CD4-positive, alpha-beta T cell (primary cell): ENCODE measurements at regions of chr22 and their contacts with region 1.

Region 1: GRCh38 chr22:35921777-35922176 is 106.8 kb downstream of the RBFOX2 start:
- DNase-seq: peak in 7 of 14 experiments; percentile 3 to 63 (median 39)
- ATAC-seq: no peak
- H3K4me3 ChIP-seq: no peak overlapping the region
- H3K4me3 Mint-ChIP-seq: no peak overlapping the region
- H3K27ac ChIP-seq: no peak overlapping the region
- H3K27ac Mint-ChIP-seq: no peak overlapping the region
- H3K4me1 ChIP-seq: no peaks in the 10 kb centered on the region
- H3K4me1 Mint-ChIP-seq: no peaks in the 10 kb centered on the region
- H3K27me3 ChIP-seq: no peaks in the 10 kb centered on the region
- H3K27me3 Mint-ChIP-seq: no peaks in the 10 kb centered on the region
- CTCF ChIP-seq: peak; percentile 53

Region 2: GRCh38 chr22:35866651-35867050 is 55.1 kb before region 1 on chr22:
- CTCF ChIA-PET with region 1: no interaction called
- POLR2A ChIA-PET with region 1: no interaction called
- intact Hi-C with region 1: no loop called
- DNase-seq: no peak
- ATAC-seq: no peak
- H3K4me3 ChIP-seq: no peak overlapping the region
- H3K4me3 Mint-ChIP-seq: no peak overlapping the region
- H3K27ac ChIP-seq: no peak overlapping the region
- H3K27ac Mint-ChIP-seq: no peak overlapping the region
- H3K4me1 ChIP-seq: no peaks in the 10 kb centered on the region
- H3K4me1 Mint-ChIP-seq: no peaks in the 10 kb centered on the region
- H3K27me3 ChIP-seq: no peaks in the 10 kb centered on the region
- H3K27me3 Mint-ChIP-seq: no peaks in the 10 kb centered on the region
- CTCF ChIP-seq: no peak

Region 3: DNA sequence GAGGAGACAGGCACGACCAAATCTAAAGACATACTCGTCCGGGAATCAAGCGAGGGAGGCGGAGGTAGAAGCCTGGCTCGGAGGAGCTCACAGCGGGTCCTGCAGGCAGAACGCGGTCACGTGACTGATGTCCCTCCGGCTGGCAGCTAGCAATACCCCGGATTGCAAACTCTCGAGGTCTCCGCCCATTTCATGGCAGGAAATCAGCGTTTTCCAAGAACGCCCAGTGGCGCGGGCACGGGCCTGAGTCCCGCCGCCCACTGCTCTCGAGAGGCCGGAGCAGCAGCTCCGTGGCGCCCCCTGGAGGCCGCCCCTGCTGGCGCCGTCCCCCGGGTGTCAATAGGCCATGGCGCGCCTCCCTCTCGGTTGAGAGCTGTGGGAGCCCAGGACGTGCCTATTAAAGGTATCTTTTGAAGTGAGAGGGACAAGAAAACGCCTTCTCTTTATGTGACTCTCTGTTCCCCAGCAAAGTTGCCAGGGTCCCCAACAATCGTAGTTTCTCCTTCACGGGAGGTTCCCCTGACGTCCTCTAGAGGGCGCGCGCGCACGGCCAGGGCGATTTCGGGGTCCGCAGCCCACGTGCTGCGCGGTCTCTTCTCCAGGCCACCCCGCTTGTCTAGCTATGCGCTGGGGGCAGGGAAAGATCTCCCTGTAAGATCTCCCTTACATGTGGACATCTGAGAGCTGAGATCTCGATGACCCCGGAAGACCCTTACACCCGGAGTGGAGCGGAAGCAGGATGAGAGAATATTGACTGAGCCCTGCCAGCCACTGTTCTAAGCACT is 144.2 kb after region 1 on chr22:
- CTCF ChIA-PET with region 1: no interaction called
- POLR2A ChIA-PET with region 1: no interaction called
- intact Hi-C with region 1: no loop called
- DNase-seq: peak; percentile 34 to 79 (median 52)
- ATAC-seq: peak; percentile 86
- H3K4me3 ChIP-seq: peak overlapping the region; percentile 50
- H3K4me3 Mint-ChIP-seq: peak overlapping the region; percentile 85
- H3K27ac ChIP-seq: no peak overlapping the region
- H3K27ac Mint-ChIP-seq: no peak overlapping the region
- H3K4me1 ChIP-seq: peaks cover 17% of the 10 kb centered on the region
- H3K4me1 Mint-ChIP-seq: peaks cover 5% of the 10 kb centered on the region
- H3K27me3 ChIP-seq: no peaks in the 10 kb centered on the region
- H3K27me3 Mint-ChIP-seq: no peaks in the 10 kb centered on the region
- CTCF ChIP-seq: peak; percentile 100

Region 4: GRCh38 chr22:36123673-36124630 is 202.2 kb after region 1 on chr22:
- CTCF ChIA-PET with region 1: no interaction called
- POLR2A ChIA-PET with region 1: no interaction called
- intact Hi-C with region 1: loop called in 1 of 2 experiments (anchors 5 kb)
- DNase-seq: peak; percentile 87 to 98 (median 92)
- ATAC-seq: peak; percentile 97
- H3K4me3 ChIP-seq: peak overlapping the region; percentile 47
- H3K4me3 Mint-ChIP-seq: peak overlapping the region; percentile 60
- H3K27ac ChIP-seq: peak overlapping the region in 1 of 2 donors; percentile 32
- H3K27ac Mint-ChIP-seq: peak overlapping the region; percentile 70
- H3K4me1 ChIP-seq: peaks cover 13% of the 10 kb centered on the region
- H3K4me1 Mint-ChIP-seq: peaks cover 8% of the 10 kb centered on the region
- H3K27me3 ChIP-seq: no peaks in the 10 kb centered on the region
- H3K27me3 Mint-ChIP-seq: no peaks in the 10 kb centered on the region
- CTCF ChIP-seq: peak; percentile 97